Gastrocnemius medialis (tissue), 4 donors: ENCODE measurements at regions of chr11 and their contacts with region 1.

Region 1: GRCh38 chr11:37409124-37409523 is 811.1 kb upstream of the RAG2 start:
- DNase-seq: no peak
- ATAC-seq: no peak
- H3K4me3 ChIP-seq: no peak overlapping the region
- H3K27ac ChIP-seq: no peak overlapping the region
- H3K4me1 ChIP-seq: no peaks in the 10 kb centered on the region
- H3K27me3 ChIP-seq: no peaks in the 10 kb centered on the region
- CTCF ChIP-seq: no peak
- POLR2A ChIP-seq: no peak

Region 2: GRCh38 chr11:36684840-36685801 is 724.0 kb before region 1 on chr11:
- in situ Hi-C with region 1: no loop called
- intact Hi-C with region 1: no loop called
- DNase-seq: no peak
- ATAC-seq: no peak
- H3K4me3 ChIP-seq: no peak overlapping the region
- H3K27ac ChIP-seq: no peak overlapping the region
- H3K4me1 ChIP-seq: no peaks in the 10 kb centered on the region
- H3K27me3 ChIP-seq: peaks cover 0 to 6% (median 2%) of the 10 kb centered on the region in 3 donors
- CTCF ChIP-seq: no peak
- POLR2A ChIP-seq: no peak

Region 3: GRCh38 chr11:37320900-37321299 is 88.2 kb before region 1 on chr11:
- in situ Hi-C with region 1: loop called in 1 of 4 experiments (anchors 25 kb)
- intact Hi-C with region 1: no loop called
- DNase-seq: no peak
- ATAC-seq: no peak
- H3K4me3 ChIP-seq: no peak overlapping the region
- H3K27ac ChIP-seq: no peak overlapping the region
- H3K4me1 ChIP-seq: no peaks in the 10 kb centered on the region
- H3K27me3 ChIP-seq: no peaks in the 10 kb centered on the region
- CTCF ChIP-seq: no peak
- POLR2A ChIP-seq: no peak

Region 4: DNA sequence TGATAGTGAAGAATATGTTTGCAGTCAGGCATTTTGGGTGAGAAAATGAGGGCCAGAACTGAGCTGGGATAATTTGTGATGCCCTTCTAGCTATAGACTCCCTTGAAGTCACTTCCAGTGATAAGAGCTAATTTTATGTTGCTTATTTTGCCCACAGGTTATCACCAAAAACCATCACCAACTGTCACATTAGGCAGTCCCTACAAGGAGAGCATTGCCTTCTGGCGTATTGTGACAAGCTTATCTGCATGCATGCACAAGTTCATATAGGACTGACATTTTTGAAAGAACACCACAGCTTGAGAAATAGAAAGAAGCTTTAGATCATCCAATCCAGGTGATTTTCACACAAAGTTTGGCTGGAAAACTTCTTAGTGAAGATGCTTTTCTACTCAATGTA is 75.8 kb before region 1 on chr11:
- in situ Hi-C with region 1: no loop called
- intact Hi-C with region 1: no loop called
- DNase-seq: no peak
- ATAC-seq: no peak
- H3K4me3 ChIP-seq: no peak overlapping the region
- H3K27ac ChIP-seq: no peak overlapping the region
- H3K4me1 ChIP-seq: no peaks in the 10 kb centered on the region
- H3K27me3 ChIP-seq: no peaks in the 10 kb centered on the region
- CTCF ChIP-seq: no peak
- POLR2A ChIP-seq: no peak